Dendritic cell treated with granulocyte-macrophage colony-stimulating factor and Interleukin-4, amounts not matched to agents 40 ng/mL and 50 ng/mL, for 4 days (primary cell): ENCODE measurements at regions of chr17 and their contacts with region 1.

Region 1: GRCh38 chr17:64420143-64420971 is 28.6 kb upstream of the MILR1 start:
- H3K4me3 Mint-ChIP-seq: no peak overlapping the region
- H3K27ac Mint-ChIP-seq: peak overlapping the region; percentile 69
- H3K4me1 Mint-ChIP-seq: peaks cover 33% of the 10 kb centered on the region
- H3K27me3 Mint-ChIP-seq: no peaks in the 10 kb centered on the region

Region 2: DNA sequence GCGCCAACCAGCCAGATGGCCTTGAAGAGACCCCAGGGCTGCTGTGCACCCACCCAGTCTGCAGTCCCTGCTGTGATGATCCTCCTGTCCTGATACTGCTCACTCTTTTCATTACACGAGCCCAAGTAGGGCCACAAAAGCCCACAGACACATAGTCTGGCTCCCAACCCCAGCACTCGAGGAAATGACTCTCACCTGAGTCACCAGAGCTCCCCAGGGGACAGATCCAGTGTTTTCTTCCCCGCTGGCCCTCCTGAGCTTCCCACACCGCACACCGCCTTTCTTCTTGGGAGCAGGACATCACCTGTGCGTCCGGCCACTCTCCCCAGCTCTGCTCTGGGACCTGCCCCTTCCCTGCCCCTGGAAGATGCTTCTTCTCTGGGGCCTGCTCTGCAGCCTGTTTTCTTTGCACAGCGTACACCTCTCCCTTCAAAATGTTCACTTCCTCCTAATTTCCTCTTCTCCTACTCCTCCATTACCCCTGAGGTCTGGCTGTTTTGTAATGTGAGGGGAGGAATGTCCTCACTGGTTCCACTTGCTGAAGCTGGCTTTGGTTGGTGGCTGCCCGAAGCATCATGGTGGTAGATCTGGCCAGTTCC is 445.7 kb before region 1 on chr17:
- intact Hi-C with region 1: no loop called
- H3K4me3 Mint-ChIP-seq: no peak overlapping the region
- H3K27ac Mint-ChIP-seq: no peak overlapping the region
- H3K4me1 Mint-ChIP-seq: peaks cover 9% of the 10 kb centered on the region
- H3K27me3 Mint-ChIP-seq: peaks cover 18% of the 10 kb centered on the region

Region 3: GRCh38 chr17:64306850-64307463 is 113.4 kb before region 1 on chr17:
- intact Hi-C with region 1: loop called (anchors 1 kb)
- H3K4me3 Mint-ChIP-seq: no peak overlapping the region
- H3K27ac Mint-ChIP-seq: no peak overlapping the region
- H3K4me1 Mint-ChIP-seq: peaks cover 17% of the 10 kb centered on the region
- H3K27me3 Mint-ChIP-seq: no peaks in the 10 kb centered on the region

Region 4: GRCh38 chr17:64320613-64321553 is 99.5 kb before region 1 on chr17:
- intact Hi-C with region 1: loop called (anchors 1 kb)
- H3K4me3 Mint-ChIP-seq: peak overlapping the region; percentile 47
- H3K27ac Mint-ChIP-seq: peak overlapping the region; percentile 45
- H3K4me1 Mint-ChIP-seq: peaks cover 58% of the 10 kb centered on the region
- H3K27me3 Mint-ChIP-seq: peaks cover 2% of the 10 kb centered on the region

Region 5: DNA sequence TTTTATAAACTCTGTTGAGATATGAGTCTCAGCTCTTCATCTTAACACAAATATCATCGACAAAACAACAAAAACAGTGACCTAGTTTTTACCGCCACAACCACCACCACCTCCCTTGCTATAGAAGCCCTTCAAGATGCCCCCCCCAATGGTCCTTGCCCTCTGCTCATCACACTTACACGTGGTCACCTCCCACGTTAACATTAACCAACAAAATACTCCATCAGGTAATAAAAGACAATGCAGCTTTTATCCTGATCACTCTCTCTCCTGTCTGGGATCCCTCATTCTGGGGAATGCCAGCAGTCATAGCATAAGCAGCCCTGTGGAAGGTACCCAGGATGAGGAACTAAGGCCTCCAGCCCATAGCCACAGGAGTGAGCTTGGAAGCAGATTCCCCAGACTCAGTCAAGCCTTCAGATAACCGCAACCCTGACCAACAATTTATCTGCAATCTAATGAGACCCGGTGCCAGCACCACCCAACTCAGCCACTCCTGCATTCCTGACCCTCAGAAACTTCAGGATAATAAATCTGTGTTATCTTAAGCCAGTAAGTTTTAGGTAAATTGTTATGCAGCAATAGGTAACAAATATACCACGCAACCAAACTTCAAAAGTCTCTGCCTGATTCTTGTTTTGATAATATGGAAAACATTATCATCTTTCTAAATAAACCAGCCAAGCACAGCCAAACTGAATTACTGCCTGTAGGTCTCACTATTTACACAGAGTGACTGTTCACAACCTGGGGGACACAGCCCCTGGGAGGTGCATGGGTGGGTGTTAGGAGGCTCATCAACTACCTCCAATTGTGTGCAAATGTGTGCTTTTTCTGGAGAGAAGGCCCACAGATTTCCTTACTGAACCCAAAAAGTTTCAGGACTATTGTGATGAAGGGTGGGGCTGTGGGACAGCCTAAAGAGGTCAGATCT is 35.8 kb before region 1 on chr17:
- intact Hi-C with region 1: loop called (anchors 5 kb)
- H3K4me3 Mint-ChIP-seq: no peak overlapping the region
- H3K27ac Mint-ChIP-seq: peak overlapping the region; percentile 37
- H3K4me1 Mint-ChIP-seq: peaks cover 81% of the 10 kb centered on the region
- H3K27me3 Mint-ChIP-seq: no peaks in the 10 kb centered on the region

Region 6: DNA sequence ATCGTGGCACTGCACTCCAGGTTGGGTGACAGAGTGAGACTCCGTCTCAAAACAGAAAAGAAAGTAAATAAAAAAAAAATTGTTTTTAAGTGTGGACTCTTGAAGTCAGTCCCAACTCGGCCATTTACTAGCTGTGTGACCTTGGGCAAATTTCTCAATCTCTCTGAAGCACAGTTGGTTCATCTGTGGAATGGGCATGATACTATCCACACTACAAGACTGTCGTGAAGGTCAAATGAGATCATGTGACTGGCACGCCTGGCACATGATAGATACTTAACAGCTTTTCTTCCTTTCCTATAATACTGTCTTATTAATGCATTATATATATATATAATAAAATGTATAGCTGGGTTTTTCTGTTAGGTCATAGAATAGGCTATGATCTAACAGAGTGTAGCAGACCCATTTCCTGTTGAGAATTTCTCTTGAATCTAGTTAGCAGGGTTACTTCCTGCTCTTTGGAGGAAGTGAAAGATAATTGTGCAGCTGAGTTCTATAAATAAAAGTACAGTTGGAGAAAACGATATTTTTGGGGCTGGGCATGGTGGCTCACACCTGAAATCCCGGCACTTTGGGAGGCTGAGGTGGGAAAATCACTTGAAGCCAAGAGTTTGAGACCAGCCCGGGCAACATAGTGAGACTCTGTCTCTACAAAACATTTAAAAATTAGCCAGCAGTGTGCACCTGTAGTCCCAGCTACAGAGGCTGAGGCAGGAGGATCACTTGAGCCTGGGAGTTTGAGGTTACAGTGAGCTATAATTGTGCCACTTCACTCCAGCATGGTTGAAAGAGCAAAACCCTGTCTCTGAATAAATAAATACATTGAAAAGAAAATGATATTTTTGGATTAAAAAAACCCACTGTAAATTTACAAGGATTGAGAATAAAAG is 35.9 kb after region 1 on chr17:
- intact Hi-C with region 1: loop called (anchors 2 kb)
- H3K4me3 Mint-ChIP-seq: peak overlapping the region; percentile 57
- H3K27ac Mint-ChIP-seq: peak overlapping the region; percentile 82
- H3K4me1 Mint-ChIP-seq: peaks cover 66% of the 10 kb centered on the region
- H3K27me3 Mint-ChIP-seq: no peaks in the 10 kb centered on the region

Region 7: GRCh38 chr17:64491034-64491859 is 70.9 kb after region 1 on chr17:
- intact Hi-C with region 1: loop called (anchors 1 kb)
- H3K4me3 Mint-ChIP-seq: no peak overlapping the region
- H3K27ac Mint-ChIP-seq: no peak overlapping the region
- H3K4me1 Mint-ChIP-seq: peaks cover 35% of the 10 kb centered on the region
- H3K27me3 Mint-ChIP-seq: no peaks in the 10 kb centered on the region

Region 8: DNA sequence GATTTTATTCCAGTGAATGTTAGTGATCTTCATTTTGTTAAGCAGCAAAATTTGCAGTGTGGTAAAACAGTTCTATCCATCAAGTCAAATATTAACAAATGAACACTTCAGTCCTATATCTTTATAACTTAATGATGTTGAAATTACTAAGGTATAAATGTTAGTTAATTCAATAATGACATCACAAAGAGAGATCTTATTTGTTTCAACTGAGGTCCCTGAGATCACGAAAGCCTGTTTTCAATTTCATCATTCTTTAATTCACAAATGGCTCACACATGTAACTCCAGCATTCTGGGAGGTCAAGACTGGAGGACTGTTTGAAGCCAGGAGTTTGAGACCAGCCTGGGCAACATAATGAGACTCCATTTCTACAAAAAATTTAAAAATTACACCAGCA is 227.9 kb after region 1 on chr17:
- intact Hi-C with region 1: loop called (anchors 2 kb)
- H3K4me3 Mint-ChIP-seq: no peak overlapping the region
- H3K27ac Mint-ChIP-seq: no peak overlapping the region
- H3K4me1 Mint-ChIP-seq: peaks cover 26% of the 10 kb centered on the region
- H3K27me3 Mint-ChIP-seq: no peaks in the 10 kb centered on the region